T-cell (primary cell): ENCODE measurements at regions of chr14 and their contacts with region 1.

Region 1: GRCh38 chr14:22570132-22570949 is 18.7 kb downstream of the DAD1 start:
- DNase-seq: peak; percentile 62 to 98 (median 86)
- ATAC-seq: peak; percentile 86 to 90 (median 90)
- H3K4me3 ChIP-seq: peak overlapping the region; percentile 41 to 48
- H3K4me3 Mint-ChIP-seq: peak overlapping the region; percentile 64 to 77 (median 75)
- H3K27ac ChIP-seq: peak overlapping the region; percentile 99
- H3K27ac Mint-ChIP-seq: peak overlapping the region; percentile 98 to 99
- H3K4me1 ChIP-seq: peaks cover 40 to 41% of the 10 kb centered on the region in 2 experiments
- H3K4me1 Mint-ChIP-seq: peaks cover 44 to 69% (median 67%) of the 10 kb centered on the region in 3 donors
- H3K27me3 ChIP-seq: no peaks in the 10 kb centered on the region
- H3K27me3 Mint-ChIP-seq: no peaks in the 10 kb centered on the region

Region 2: DNA sequence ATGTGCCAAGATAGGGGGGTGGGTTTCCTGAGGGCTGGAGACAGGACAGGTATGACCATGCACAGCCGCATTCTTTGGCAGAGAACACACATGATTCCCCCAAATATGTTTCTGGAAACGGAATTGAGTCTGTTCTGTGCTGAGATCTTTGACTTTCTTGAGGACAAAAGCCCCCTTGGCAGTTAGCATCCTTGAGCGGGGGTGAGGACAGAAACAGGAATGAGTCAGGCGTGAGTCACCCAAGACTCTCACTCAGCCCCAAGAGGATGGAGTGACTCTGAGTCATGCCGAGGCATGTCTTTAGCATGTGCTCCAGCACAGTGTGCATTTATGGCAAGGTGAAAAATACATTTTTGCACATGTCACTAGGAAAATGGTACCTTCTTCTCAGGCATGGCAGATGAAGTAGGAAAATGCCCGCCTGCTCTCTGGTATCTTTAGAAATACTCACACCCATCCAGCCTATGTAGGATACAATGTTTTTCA is 33.4 kb before region 1 on chr14:
- CTCF ChIA-PET with region 1: interaction called in 1 of 2 experiments, 16 read pairs
- POLR2A ChIA-PET with region 1: interaction called in 1 of 2 experiments, 3 read pairs
- DNase-seq: peak in 29 of 35 experiments; percentile 41 to 86 (median 57)
- ATAC-seq: peak; percentile 82 to 93 (median 92)
- H3K4me3 ChIP-seq: peak overlapping the region; percentile 38 to 42
- H3K4me3 Mint-ChIP-seq: peak overlapping the region; percentile 77 to 86 (median 83)
- H3K27ac ChIP-seq: peak overlapping the region; percentile 88
- H3K27ac Mint-ChIP-seq: peak overlapping the region; percentile 98 to 99
- H3K4me1 ChIP-seq: peaks cover 87 to 92% of the 10 kb centered on the region in 2 experiments
- H3K4me1 Mint-ChIP-seq: peaks cover 95 to 96% (median 96%) of the 10 kb centered on the region in 3 donors
- H3K27me3 ChIP-seq: no peaks in the 10 kb centered on the region
- H3K27me3 Mint-ChIP-seq: no peaks in the 10 kb centered on the region

Region 3: GRCh38 chr14:22589096-22589839 is 18.9 kb after region 1 on chr14 and contains the start of gene DAD1:
- CTCF ChIA-PET with region 1: interaction called, 6 to 82 read pairs
- POLR2A ChIA-PET with region 1: interaction called, 5 to 11 read pairs
- DNase-seq: peak; percentile 97 to 100 (median 99)
- ATAC-seq: peak; percentile 93
- H3K4me3 ChIP-seq: peak within 1 kb of the TSS; percentile 88 to 90
- H3K4me3 Mint-ChIP-seq: peak within 1 kb of the TSS; percentile 93 to 99 (median 97)
- H3K27ac ChIP-seq: peak within 1 kb of the TSS; percentile 98
- H3K27ac Mint-ChIP-seq: peak within 1 kb of the TSS; percentile 99 to 100
- H3K4me1 ChIP-seq: peaks cover 25 to 34% of the 10 kb centered on the region in 2 experiments
- H3K4me1 Mint-ChIP-seq: peaks cover 59 to 62% (median 61%) of the 10 kb centered on the region in 3 donors
- H3K27me3 ChIP-seq: peaks cover 0 to 2% of the 10 kb centered on the region in 2 experiments
- H3K27me3 Mint-ChIP-seq: peaks cover 0 to 5% of the 10 kb centered on the region in 2 donors
- total RNA-seq, gene DAD1: 80.9 to 127 (median 113) TPM

Region 4: GRCh38 chr14:22766456-22767322 is 196.3 kb after region 1 on chr14 and contains the start of gene OXA1L:
- CTCF ChIA-PET with region 1: interaction called in 1 of 2 experiments, 10 read pairs
- POLR2A ChIA-PET with region 1: no interaction called
- DNase-seq: peak; percentile 89 to 99 (median 96)
- ATAC-seq: peak; percentile 90 to 95 (median 94)
- H3K4me3 ChIP-seq: peak within 1 kb of the TSS; percentile 92 to 100
- H3K4me3 Mint-ChIP-seq: peak within 1 kb of the TSS; percentile 85 to 91 (median 88)
- H3K27ac ChIP-seq: peak within 1 kb of the TSS; percentile 87
- H3K27ac Mint-ChIP-seq: peak within 1 kb of the TSS; percentile 93 to 98
- H3K4me1 ChIP-seq: peaks cover 16 to 18% of the 10 kb centered on the region in 2 experiments
- H3K4me1 Mint-ChIP-seq: peaks cover 33 to 41% (median 35%) of the 10 kb centered on the region in 3 donors
- H3K27me3 ChIP-seq: no peaks in the 10 kb centered on the region
- H3K27me3 Mint-ChIP-seq: no peaks in the 10 kb centered on the region
- total RNA-seq, gene OXA1L: 130 to 152 (median 136) TPM

Region 5: DNA sequence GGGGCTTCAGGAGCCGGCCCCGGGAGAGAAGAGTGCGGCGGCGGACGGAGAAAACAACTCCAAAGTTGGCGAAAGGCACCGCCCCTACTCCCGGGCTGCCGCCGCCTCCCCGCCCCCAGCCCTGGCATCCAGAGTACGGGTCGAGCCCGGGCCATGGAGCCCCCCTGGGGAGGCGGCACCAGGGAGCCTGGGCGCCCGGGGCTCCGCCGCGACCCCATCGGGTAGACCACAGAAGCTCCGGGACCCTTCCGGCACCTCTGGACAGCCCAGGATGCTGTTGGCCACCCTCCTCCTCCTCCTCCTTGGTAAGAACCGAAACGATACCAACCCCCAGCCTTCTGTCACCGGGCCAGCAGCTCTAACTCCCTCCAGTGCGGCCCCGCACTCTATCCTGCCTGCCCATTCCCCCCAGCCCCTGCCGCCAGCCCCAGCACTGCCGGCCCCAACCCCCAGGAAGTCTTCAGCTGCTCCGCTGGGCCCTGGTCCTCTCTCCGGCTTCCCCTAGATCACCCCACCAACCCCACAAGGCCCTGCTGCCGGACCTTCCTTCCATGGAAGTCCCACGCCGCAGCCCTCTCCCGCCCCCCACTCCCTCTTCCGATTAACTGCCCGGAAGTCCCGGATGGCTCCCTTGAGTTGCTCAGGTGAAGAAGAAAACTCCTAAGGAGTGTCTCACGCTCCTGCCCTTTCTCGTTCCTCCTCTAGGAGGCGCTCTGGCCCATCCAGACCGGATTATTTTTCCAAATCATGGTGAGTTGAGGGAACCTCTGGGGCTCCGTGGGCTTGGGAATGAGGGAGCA is 301.9 kb after region 1 on chr14:
- CTCF ChIA-PET with region 1: interaction called, 8 to 11 read pairs
- POLR2A ChIA-PET with region 1: no interaction called
- DNase-seq: peak in 34 of 35 experiments; percentile 29 to 84 (median 57)
- ATAC-seq: peak; percentile 30 to 55 (median 44)
- H3K4me3 ChIP-seq: peak overlapping the region; percentile 78 to 80
- H3K4me3 Mint-ChIP-seq: peak overlapping the region; percentile 86 to 92 (median 91)
- H3K27ac ChIP-seq: peak overlapping the region; percentile 91
- H3K27ac Mint-ChIP-seq: peak overlapping the region; percentile 97 to 98
- H3K4me1 ChIP-seq: peaks cover 12 to 56% of the 10 kb centered on the region in 2 experiments
- H3K4me1 Mint-ChIP-seq: peaks cover 29 to 45% (median 45%) of the 10 kb centered on the region in 3 donors
- H3K27me3 ChIP-seq: no peaks in the 10 kb centered on the region
- H3K27me3 Mint-ChIP-seq: no peaks in the 10 kb centered on the region